ENCODE measurements at regions of chr9 and their contacts with region 1.

Region 1: GRCh38 chr9:129884220-129885017 is 49.2 kb downstream of the USP20 start:
- DNase-seq: peak; percentile 98
- ATAC-seq: peak; percentile 57
- H3K4me3 Mint-ChIP-seq: peak overlapping the region; percentile 92
- H3K27ac Mint-ChIP-seq: peak overlapping the region; percentile 99
- H3K4me1 Mint-ChIP-seq: peaks cover 37% of the 10 kb centered on the region
- H3K27me3 Mint-ChIP-seq: no peaks in the 10 kb centered on the region
- CTCF ChIP-seq: no peak

Region 2: GRCh38 chr9:129569502-129570449 is 314.6 kb before region 1 on chr9:
- CTCF ChIA-PET with region 1: no interaction called
- POLR2A ChIA-PET with region 1: no interaction called
- intact Hi-C with region 1: no loop called
- DNase-seq: no peak
- ATAC-seq: no peak
- H3K4me3 Mint-ChIP-seq: peak overlapping the region; percentile 58
- H3K27ac Mint-ChIP-seq: peak overlapping the region; percentile 63
- H3K4me1 Mint-ChIP-seq: peaks cover 26% of the 10 kb centered on the region
- H3K27me3 Mint-ChIP-seq: peaks cover 22% of the 10 kb centered on the region
- CTCF ChIP-seq: peak; percentile 36

Region 3: GRCh38 chr9:129761901-129762364 is 122.5 kb before region 1 on chr9:
- CTCF ChIA-PET with region 1: no interaction called
- POLR2A ChIA-PET with region 1: no interaction called
- intact Hi-C with region 1: no loop called
- DNase-seq: no peak
- ATAC-seq: no peak
- H3K4me3 Mint-ChIP-seq: no peak overlapping the region
- H3K27ac Mint-ChIP-seq: no peak overlapping the region
- H3K4me1 Mint-ChIP-seq: peaks cover 9% of the 10 kb centered on the region
- H3K27me3 Mint-ChIP-seq: no peaks in the 10 kb centered on the region
- CTCF ChIP-seq: no peak

Region 4: DNA sequence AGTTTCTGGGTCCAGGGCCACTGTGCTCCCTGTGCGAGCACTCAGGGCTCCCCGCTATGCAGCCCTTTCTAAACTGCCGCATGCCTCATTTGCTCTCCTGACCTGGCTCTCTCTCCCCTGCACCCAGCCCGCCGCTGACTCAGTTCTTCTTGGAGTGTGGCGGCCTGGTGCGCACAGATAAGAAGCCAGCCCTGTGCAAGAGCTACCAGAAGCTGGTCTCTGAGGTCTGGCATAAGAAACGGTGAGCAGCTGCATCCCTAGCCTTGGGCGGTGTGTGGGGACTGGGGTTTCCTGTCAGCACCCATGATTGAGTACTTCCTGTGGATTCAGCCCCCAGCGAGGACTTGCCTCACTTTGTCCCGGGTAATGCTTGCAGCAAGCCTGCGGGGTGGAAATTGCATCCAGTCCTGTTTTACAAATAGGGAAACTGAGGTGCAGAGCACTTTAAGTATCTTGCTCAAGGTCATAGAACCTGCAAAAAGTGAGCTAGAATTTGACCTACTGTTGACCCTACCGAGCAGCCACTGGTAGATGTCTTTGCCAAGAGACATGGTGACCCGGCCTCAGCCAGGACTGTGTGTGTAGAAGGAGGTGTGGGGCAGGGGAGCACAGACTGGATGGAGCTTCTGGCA is 21.2 kb before region 1 on chr9:
- CTCF ChIA-PET with region 1: interaction called, 8 read pairs
- POLR2A ChIA-PET with region 1: interaction called, 114 read pairs
- intact Hi-C with region 1: no loop called
- DNase-seq: peak; percentile 92
- ATAC-seq: peak; percentile 78
- H3K4me3 Mint-ChIP-seq: peak overlapping the region; percentile 44
- H3K27ac Mint-ChIP-seq: peak overlapping the region; percentile 88
- H3K4me1 Mint-ChIP-seq: peaks cover 67% of the 10 kb centered on the region
- H3K27me3 Mint-ChIP-seq: no peaks in the 10 kb centered on the region
- CTCF ChIP-seq: no peak

Region 5: DNA sequence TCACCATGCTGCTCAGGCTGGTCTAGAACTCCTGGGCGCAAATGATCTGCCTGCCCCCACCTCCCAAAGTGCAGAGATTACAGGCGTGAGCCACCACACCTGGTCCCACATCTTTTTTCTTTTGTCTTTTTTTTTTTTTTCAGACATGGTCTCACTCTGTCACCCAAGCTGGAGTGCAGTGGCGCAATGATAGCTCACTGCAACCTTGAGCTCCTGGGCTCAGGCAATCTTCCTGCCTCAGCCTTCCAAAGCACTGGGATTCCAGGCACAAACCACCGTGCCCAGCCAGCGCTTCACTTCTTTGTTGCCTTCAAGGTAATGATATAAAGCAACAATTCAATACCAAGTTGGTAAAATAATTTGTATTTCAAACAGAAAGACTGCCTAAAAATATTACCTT is 29.6 kb after region 1 on chr9:
- CTCF ChIA-PET with region 1: interaction called, 3 read pairs
- POLR2A ChIA-PET with region 1: interaction called, 12 read pairs
- intact Hi-C with region 1: no loop called
- DNase-seq: no peak
- ATAC-seq: no peak
- H3K4me3 Mint-ChIP-seq: no peak overlapping the region
- H3K27ac Mint-ChIP-seq: peak overlapping the region; percentile 55
- H3K4me1 Mint-ChIP-seq: peaks cover 27% of the 10 kb centered on the region
- H3K27me3 Mint-ChIP-seq: no peaks in the 10 kb centered on the region
- CTCF ChIP-seq: no peak

Region 6: GRCh38 chr9:129954868-129955550 is 70.6 kb after region 1 on chr9:
- CTCF ChIA-PET with region 1: interaction called, 4 read pairs
- POLR2A ChIA-PET with region 1: interaction called, 25 read pairs
- intact Hi-C with region 1: loop called (anchors 5 kb)
- DNase-seq: no peak
- ATAC-seq: no peak
- H3K4me3 Mint-ChIP-seq: no peak overlapping the region
- H3K27ac Mint-ChIP-seq: peak overlapping the region; percentile 70
- H3K4me1 Mint-ChIP-seq: peaks cover 52% of the 10 kb centered on the region
- H3K27me3 Mint-ChIP-seq: no peaks in the 10 kb centered on the region
- CTCF ChIP-seq: no peak

Region 7: GRCh38 chr9:130029223-130029973 is 145.0 kb after region 1 on chr9:
- CTCF ChIA-PET with region 1: interaction called, 4 read pairs
- POLR2A ChIA-PET with region 1: interaction called, 35 read pairs
- intact Hi-C with region 1: no loop called
- DNase-seq: peak; percentile 73
- ATAC-seq: peak; percentile 52
- H3K4me3 Mint-ChIP-seq: peak overlapping the region; percentile 56
- H3K27ac Mint-ChIP-seq: peak overlapping the region; percentile 99
- H3K4me1 Mint-ChIP-seq: peaks cover 89% of the 10 kb centered on the region
- H3K27me3 Mint-ChIP-seq: no peaks in the 10 kb centered on the region
- CTCF ChIP-seq: no peak

Region 8: GRCh38 chr9:130042833-130043653 is 158.6 kb after region 1 on chr9 and contains the start of gene FNBP1:
- CTCF ChIA-PET with region 1: interaction called, 18 read pairs
- POLR2A ChIA-PET with region 1: interaction called, 39 read pairs
- intact Hi-C with region 1: loop called (anchors 2 kb)
- DNase-seq: peak; percentile 81
- ATAC-seq: peak; percentile 72
- H3K4me3 Mint-ChIP-seq: peak within 1 kb of the TSS; percentile 97
- H3K27ac Mint-ChIP-seq: peak within 1 kb of the TSS; percentile 100
- H3K4me1 Mint-ChIP-seq: peaks cover 30% of the 10 kb centered on the region
- H3K27me3 Mint-ChIP-seq: no peaks in the 10 kb centered on the region
- CTCF ChIP-seq: no peak
- total RNA-seq, gene FNBP1: 266 to 268 TPM

Measured in activated CD8-positive, alpha-beta T cell treated with anti-CD3 and anti-CD28 coated beads for 36 hours (primary cell).